Activated naive CD4-positive, alpha-beta T cell treated with anti-CD3 and anti-CD28 coated beads for 36 hours (primary cell): ENCODE measurements at regions of chr7 and their contacts with region 1.

Region 1: GRCh38 chr7:155665957-155666287 is 21.5 kb downstream of the RBM33 start:
- DNase-seq: no peak
- H3K4me3 Mint-ChIP-seq: no peak overlapping the region
- H3K27ac Mint-ChIP-seq: no peak overlapping the region
- H3K4me1 Mint-ChIP-seq: peaks cover 77% of the 10 kb centered on the region
- H3K27me3 Mint-ChIP-seq: no peaks in the 10 kb centered on the region

Region 2: DNA sequence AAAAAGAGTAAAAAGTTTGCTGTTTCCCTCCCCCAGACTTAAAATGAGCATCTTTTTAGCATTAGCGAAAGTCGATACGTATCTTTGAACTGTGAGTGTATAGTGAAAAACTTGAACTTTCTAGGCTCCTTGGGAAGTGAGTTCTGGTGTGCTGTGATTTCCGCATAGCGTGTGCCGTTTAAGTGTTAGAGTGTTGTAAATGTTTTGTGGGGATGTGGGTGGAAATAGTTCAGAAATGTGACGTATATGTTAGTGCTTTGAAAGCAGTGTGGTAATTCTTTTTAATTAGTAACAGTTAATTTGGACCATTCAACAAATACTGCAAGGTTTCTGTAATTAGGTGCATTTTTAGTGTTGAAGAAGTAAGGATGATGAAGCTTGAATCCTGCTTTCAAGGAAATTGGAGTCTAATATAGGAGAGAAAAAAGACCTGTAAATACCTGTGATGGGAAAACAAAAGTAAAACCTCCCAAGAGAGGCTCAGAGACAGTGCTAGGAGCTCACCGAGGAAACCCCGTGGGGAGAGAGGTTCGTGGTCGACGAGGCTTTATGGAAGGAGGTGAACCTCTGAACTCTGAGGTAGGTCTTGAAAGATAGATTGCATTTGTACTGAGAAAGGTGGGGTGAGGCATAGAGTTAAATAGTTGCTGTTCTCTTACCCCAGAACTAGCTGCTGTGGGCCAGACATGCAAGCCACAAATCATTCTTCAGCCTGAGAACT is 19.3 kb after region 1 on chr7:
- CTCF ChIA-PET with region 1: no interaction called
- intact Hi-C with region 1: loop called (anchors 2 kb)
- DNase-seq: no peak
- H3K4me3 Mint-ChIP-seq: peak overlapping the region; percentile 1
- H3K27ac Mint-ChIP-seq: peak overlapping the region; percentile 1
- H3K4me1 Mint-ChIP-seq: peaks cover 80% of the 10 kb centered on the region
- H3K27me3 Mint-ChIP-seq: no peaks in the 10 kb centered on the region

Region 3: DNA sequence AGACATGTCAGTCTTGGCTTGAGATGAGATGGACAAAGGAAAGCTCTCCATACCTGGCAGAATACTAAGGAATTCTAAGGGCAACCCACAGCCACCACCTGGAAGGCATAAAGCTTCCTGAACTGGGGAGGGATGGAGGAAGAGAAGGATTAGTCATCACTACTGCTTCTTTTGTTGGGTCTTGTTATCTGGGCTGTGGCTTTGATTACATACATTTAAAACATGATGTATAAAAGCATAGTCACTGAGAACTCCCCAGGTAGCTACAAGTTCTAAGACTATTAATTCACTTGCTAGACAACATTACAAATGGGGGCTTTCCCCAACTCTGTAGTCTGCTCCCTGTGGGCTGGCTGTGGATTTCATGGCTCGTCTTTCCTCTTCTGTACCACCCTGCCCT is 36.7 kb after region 1 on chr7:
- CTCF ChIA-PET with region 1: interaction called, 6 read pairs
- intact Hi-C with region 1: loop called (anchors 2 kb)
- DNase-seq: no peak
- H3K4me3 Mint-ChIP-seq: no peak overlapping the region
- H3K27ac Mint-ChIP-seq: peak overlapping the region; percentile 54
- H3K4me1 Mint-ChIP-seq: peaks cover 24% of the 10 kb centered on the region
- H3K27me3 Mint-ChIP-seq: no peaks in the 10 kb centered on the region

Region 4: GRCh38 chr7:156100086-156100485 is 434.2 kb after region 1 on chr7:
- CTCF ChIA-PET with region 1: no interaction called
- intact Hi-C with region 1: no loop called
- DNase-seq: no peak
- H3K4me3 Mint-ChIP-seq: no peak overlapping the region
- H3K27ac Mint-ChIP-seq: no peak overlapping the region
- H3K4me1 Mint-ChIP-seq: peaks cover 26% of the 10 kb centered on the region
- H3K27me3 Mint-ChIP-seq: no peaks in the 10 kb centered on the region